ENCODE measurements at regions of chr1 and their contacts with region 1.

Region 1: GRCh38 chr1:59947047-59947938 is 20.7 kb upstream of the CYP2J2 start:
- DNase-seq: peak in 31 of 35 experiments; percentile 8 to 76 (median 37)
- ATAC-seq: peak; percentile 59 to 79 (median 74)
- H3K4me3 ChIP-seq: no peak overlapping the region
- H3K4me3 Mint-ChIP-seq: no peak overlapping the region
- H3K27ac ChIP-seq: no peak overlapping the region
- H3K27ac Mint-ChIP-seq: no peak overlapping the region
- H3K4me1 ChIP-seq: no peaks in the 10 kb centered on the region
- H3K4me1 Mint-ChIP-seq: no peaks in the 10 kb centered on the region
- H3K27me3 ChIP-seq: no peaks in the 10 kb centered on the region
- H3K27me3 Mint-ChIP-seq: peaks cover 3 to 16% of the 10 kb centered on the region in 2 donors

Region 2: GRCh38 chr1:59879574-59879973 is 67.7 kb before region 1 on chr1:
- CTCF ChIA-PET with region 1: interaction called, 10 to 26 read pairs
- POLR2A ChIA-PET with region 1: no interaction called
- DNase-seq: peak in 31 of 35 experiments; percentile 3 to 72 (median 39)
- ATAC-seq: peak in 2 of 4 experiments; percentile 37 to 63
- H3K4me3 ChIP-seq: no peak overlapping the region
- H3K4me3 Mint-ChIP-seq: no peak overlapping the region
- H3K27ac ChIP-seq: no peak overlapping the region
- H3K27ac Mint-ChIP-seq: no peak overlapping the region
- H3K4me1 ChIP-seq: no peaks in the 10 kb centered on the region
- H3K4me1 Mint-ChIP-seq: no peaks in the 10 kb centered on the region
- H3K27me3 ChIP-seq: no peaks in the 10 kb centered on the region
- H3K27me3 Mint-ChIP-seq: peaks cover 0 to 5% of the 10 kb centered on the region in 2 donors